ENCODE measurements at regions of chr7 and their contacts with region 1.

Region 1: DNA sequence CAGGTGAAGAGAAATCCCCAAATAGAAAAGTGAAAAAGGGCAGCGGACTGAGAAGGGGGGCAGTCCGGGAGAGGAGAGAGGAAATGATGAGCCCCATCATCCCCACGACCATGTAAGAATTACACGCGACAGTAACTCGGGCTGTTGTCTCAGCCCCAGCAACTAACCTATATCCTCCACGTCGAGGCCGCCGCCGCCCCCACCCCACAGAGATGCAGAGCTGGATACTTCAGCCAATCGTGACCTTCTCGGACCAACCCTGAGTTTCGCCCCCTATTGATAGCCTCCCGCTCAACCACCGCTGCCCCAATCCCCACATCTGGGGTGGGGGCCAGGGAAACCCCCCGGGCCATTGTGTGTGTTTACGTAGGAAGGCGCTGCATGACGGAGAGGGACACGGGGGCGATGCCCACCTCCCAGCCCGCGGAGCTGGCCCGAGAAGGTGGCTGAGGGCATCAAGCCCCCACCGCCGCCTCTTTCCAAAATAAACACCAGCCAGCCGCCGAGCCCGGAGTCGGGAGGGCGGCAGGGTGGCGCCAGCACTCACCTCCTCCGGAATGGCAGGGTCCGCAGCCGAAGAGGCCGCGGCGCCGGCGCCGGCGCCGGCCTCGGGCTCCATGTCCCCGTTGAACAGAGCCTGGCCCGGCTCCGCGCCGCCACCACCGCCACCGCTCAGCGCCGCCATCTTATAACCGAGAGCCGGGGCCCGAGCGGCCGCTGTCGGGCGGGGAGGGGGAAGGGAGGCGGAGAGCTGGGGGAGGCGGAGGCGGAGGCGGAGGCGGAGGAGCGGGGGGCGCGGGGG is 509 bp downstream of the BRAF start:
- DNase-seq: peak; percentile 47 to 49
- ATAC-seq: peak; percentile 78 to 83
- H3K4me3 ChIP-seq: peak overlapping the region; percentile 71 to 97 (median 95)
- H3K27ac ChIP-seq: peak overlapping the region; percentile 90 to 99 (median 96)
- H3K4me1 ChIP-seq: peaks cover 19 to 36% of the 10 kb centered on the region in 2 donors
- H3K27me3 ChIP-seq: no peaks in the 10 kb centered on the region
- CTCF ChIP-seq: peak in 3 of 5 experiments; percentile 44 to 61 (median 49)
- POLR2A ChIP-seq: peak; percentile 23 to 27

Region 2: GRCh38 chr7:140479062-140479738 is 445.0 kb before region 1 on chr7 and contains the start of gene MKRN1:
- in situ Hi-C with region 1: no loop called
- intact Hi-C with region 1: loop called (anchors 10 kb)
- DNase-seq: peak; percentile 92
- ATAC-seq: peak; percentile 92 to 97
- H3K4me3 ChIP-seq: peak within 1 kb of the TSS; percentile 85 to 98 (median 91)
- H3K27ac ChIP-seq: peak within 1 kb of the TSS; percentile 73 to 96 (median 84)
- H3K4me1 ChIP-seq: peaks cover 13 to 18% of the 10 kb centered on the region in 2 donors
- H3K27me3 ChIP-seq: no peaks in the 10 kb centered on the region
- CTCF ChIP-seq: peak in 1 of 5 experiments; percentile 24
- POLR2A ChIP-seq: peak; percentile 53 to 77
- total RNA-seq, gene MKRN1: 38.0 to 90.4 (median 64.7) TPM

Region 3: DNA sequence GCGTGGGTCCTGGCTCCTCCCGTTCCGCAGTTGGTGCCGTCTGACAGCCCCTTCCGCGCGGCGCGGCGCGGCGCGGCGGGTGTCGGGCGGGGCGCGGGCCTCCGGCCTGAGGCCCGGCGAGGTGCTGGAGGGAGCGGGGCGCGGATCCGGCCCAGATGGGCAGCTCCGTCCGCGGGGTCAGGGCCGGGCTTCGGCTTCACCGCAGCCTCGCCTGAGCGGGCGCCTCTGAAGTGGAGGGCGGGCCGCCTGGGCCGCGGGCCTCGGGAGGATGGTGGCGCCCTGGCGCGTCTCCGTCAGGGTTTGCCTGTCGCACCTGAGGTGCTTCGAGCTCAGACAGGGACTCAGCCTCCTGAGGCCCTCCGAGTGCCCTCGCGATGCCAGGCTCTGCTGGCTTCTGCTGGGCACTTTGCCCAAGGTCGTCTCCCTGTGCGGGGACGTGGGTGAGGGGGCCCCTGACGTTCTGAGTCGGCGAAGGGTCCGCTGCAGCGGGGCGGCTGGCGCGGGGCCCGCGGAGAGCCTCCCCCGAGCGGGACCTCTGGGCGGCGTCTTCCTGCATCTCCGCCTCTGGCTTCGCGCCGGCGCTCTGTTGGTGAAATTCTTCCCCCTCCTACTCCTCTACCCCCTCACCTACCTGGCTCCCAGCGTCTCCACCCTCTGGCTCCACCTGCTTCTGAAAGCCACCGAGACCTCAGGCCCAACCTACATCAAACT is 251.0 kb before region 1 on chr7:
- in situ Hi-C with region 1: no loop called
- intact Hi-C with region 1: loop called (anchors 5 kb)
- DNase-seq: peak in 1 of 2 donors; percentile 31
- ATAC-seq: peak; percentile 72 to 75
- H3K4me3 ChIP-seq: peak overlapping the region; percentile 66 to 89 (median 75)
- H3K27ac ChIP-seq: peak overlapping the region; percentile 69 to 83 (median 76)
- H3K4me1 ChIP-seq: peaks cover 16 to 26% of the 10 kb centered on the region in 2 donors
- H3K27me3 ChIP-seq: no peaks in the 10 kb centered on the region
- CTCF ChIP-seq: no peak
- POLR2A ChIP-seq: peak; percentile 18 to 45

Region 4: GRCh38 chr7:140696680-140697446 is 227.4 kb before region 1 on chr7 and contains the start of gene NDUFB2:
- in situ Hi-C with region 1: loop called in 1 of 4 experiments (anchors 10 kb)
- intact Hi-C with region 1: loop called (anchors 5 kb)
- DNase-seq: peak; percentile 64 to 73
- ATAC-seq: peak; percentile 94 to 95
- H3K4me3 ChIP-seq: peak within 1 kb of the TSS; percentile 71 to 95 (median 88)
- H3K27ac ChIP-seq: peak within 1 kb of the TSS; percentile 84 to 98 (median 88)
- H3K4me1 ChIP-seq: peaks cover 14 to 16% of the 10 kb centered on the region in 2 donors
- H3K27me3 ChIP-seq: no peaks in the 10 kb centered on the region
- CTCF ChIP-seq: no peak
- POLR2A ChIP-seq: peak; percentile 92 to 94
- total RNA-seq, gene NDUFB2: 449 to 793 (median 538) TPM

Region 5: GRCh38 chr7:140810830-140811556 is 113.2 kb before region 1 on chr7:
- in situ Hi-C with region 1: no loop called
- intact Hi-C with region 1: loop called (anchors 1 kb)
- DNase-seq: peak; percentile 18 to 41
- ATAC-seq: peak; percentile 93 to 97
- H3K4me3 ChIP-seq: no peak overlapping the region
- H3K27ac ChIP-seq: no peak overlapping the region
- H3K4me1 ChIP-seq: no peaks in the 10 kb centered on the region
- H3K27me3 ChIP-seq: no peaks in the 10 kb centered on the region
- CTCF ChIP-seq: peak; percentile 53 to 78 (median 70)
- POLR2A ChIP-seq: no peak

Region 6: DNA sequence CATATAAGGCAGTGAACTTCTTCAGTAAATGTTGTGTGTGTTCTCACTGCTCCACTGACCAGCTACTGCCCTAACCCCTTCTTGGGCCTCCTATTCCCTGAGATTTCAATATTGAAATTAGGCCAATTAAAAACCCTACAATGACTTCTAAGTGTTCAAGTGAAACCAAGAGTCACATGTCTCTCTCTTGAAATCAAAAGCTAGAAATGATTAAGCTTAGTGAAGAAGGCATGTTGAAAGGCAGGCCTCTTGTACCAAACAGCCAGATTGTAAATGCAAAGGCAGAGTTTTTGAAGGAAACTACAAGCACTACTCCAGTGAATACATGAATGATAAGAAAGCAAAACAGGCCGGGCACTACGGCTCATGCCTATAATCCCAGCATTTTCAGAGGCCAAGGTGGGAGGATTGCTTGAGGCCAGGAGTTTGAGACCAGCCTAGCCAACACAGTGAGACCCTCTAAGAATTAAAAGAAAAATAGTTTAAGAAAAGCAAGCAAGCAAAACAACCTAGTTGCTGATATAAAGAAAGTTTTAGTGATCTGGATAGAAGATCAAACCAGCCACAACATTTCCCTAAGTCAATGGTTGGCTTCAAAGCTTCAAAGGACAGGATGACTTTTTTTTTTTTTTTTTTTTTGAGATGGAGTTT is 21.8 kb before region 1 on chr7:
- in situ Hi-C with region 1: no loop called
- intact Hi-C with region 1: no loop called
- DNase-seq: no peak
- ATAC-seq: no peak
- H3K4me3 ChIP-seq: no peak overlapping the region
- H3K27ac ChIP-seq: no peak overlapping the region
- H3K4me1 ChIP-seq: no peaks in the 10 kb centered on the region
- H3K27me3 ChIP-seq: no peaks in the 10 kb centered on the region
- CTCF ChIP-seq: no peak
- POLR2A ChIP-seq: no peak

Region 7: DNA sequence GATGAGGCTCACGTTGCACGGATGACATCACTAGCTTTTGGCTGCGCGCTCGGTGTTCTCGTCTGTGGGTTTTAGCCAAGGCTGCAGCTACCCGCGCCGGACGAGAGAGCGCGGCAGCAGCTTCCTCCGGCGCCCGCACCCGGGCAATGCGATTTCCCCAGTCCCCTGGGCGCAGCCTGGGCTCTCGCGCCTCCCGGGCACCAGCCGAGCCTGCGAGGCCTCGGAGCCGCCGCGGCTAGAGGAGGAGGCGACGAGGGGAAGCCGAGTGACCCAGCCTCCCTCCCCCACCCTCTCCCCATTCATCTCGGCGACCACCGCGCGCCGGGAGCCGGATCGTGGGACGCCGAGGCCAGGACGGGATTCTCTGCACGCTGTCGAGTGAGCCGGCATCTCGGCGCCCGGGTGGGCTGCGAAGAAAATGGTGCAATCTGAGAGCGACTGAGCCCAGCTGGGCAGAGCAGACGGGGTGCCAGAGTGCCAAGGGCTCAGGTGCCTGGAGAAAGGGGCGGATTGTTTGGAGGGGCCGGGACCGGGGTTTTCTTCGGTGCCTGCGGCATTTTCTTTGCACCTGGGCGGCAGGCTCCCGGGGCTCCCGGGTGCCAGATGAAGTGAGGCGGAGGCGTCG is 148.4 kb after region 1 on chr7:
- in situ Hi-C with region 1: no loop called
- intact Hi-C with region 1: loop called (anchors 5 kb)
- DNase-seq: peak; percentile 46 to 69
- ATAC-seq: peak; percentile 86 to 91
- H3K4me3 ChIP-seq: peak overlapping the region; percentile 69 to 76 (median 71)
- H3K27ac ChIP-seq: peak overlapping the region; percentile 65 to 81 (median 76)
- H3K4me1 ChIP-seq: peaks cover 14 to 45% of the 10 kb centered on the region in 2 donors
- H3K27me3 ChIP-seq: peaks cover 0 to 3% (median 0%) of the 10 kb centered on the region in 3 donors
- CTCF ChIP-seq: no peak
- POLR2A ChIP-seq: peak; percentile 17 to 33

Region 8: DNA sequence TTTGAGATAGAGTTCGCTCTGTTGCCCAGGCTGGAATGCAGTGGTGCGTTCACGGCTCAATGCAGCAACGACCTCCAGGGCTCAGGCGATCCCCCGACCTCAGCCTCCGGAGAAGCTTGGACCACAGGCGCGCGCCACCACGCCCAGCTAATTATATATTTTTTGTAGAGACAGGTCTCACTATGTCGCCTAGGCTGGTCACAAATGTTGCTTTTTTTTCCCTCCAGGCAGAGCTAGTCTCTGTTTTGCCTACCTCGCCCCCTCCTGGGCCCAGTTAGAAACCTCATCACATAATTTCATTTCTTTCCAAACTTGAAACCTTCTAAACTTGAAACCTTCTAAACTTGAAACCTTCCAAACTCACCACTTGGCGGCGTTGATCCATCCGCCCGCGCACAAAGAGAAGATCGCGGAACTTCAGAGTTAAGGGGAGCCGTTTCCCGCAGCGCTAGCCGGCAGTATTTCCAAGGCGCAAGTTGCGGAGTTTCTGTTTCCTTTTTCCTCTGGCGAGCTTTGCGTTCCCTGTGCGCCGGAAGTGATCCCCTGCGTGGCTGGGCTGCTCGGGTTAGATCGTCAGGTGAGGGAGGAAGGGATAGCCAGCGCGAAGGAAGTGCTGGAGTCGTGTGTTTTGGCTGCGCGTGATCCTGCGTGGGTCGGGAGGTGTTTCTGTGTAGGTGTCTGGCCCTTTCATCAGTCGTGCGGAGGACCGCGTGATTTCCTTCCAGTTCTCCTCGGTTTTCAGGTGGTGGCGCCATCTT is 813.8 kb after region 1 on chr7 and contains the start of gene SSBP1:
- in situ Hi-C with region 1: no loop called
- intact Hi-C with region 1: loop called (anchors 1 kb)
- DNase-seq: peak; percentile 85 to 88
- ATAC-seq: peak; percentile 98 to 99
- H3K4me3 ChIP-seq: peak within 1 kb of the TSS; percentile 74 to 97 (median 84)
- H3K27ac ChIP-seq: peak within 1 kb of the TSS; percentile 81 to 87 (median 84)
- H3K4me1 ChIP-seq: peaks cover 15 to 18% of the 10 kb centered on the region in 2 donors
- H3K27me3 ChIP-seq: no peaks in the 10 kb centered on the region
- CTCF ChIP-seq: peak; percentile 68 to 80 (median 76)
- POLR2A ChIP-seq: peak; percentile 57 to 67
- total RNA-seq, gene SSBP1: 127 to 147 (median 138) TPM